Activated CD4-positive, alpha-beta memory T cell treated with anti-CD3 and anti-CD28 coated beads, Interleukin-2, amount 10 ng/mL, durations not matched to agents 7 days and 5 days (primary cell): ENCODE measurements at regions of chr20 and their contacts with region 1.

Region 1: DNA sequence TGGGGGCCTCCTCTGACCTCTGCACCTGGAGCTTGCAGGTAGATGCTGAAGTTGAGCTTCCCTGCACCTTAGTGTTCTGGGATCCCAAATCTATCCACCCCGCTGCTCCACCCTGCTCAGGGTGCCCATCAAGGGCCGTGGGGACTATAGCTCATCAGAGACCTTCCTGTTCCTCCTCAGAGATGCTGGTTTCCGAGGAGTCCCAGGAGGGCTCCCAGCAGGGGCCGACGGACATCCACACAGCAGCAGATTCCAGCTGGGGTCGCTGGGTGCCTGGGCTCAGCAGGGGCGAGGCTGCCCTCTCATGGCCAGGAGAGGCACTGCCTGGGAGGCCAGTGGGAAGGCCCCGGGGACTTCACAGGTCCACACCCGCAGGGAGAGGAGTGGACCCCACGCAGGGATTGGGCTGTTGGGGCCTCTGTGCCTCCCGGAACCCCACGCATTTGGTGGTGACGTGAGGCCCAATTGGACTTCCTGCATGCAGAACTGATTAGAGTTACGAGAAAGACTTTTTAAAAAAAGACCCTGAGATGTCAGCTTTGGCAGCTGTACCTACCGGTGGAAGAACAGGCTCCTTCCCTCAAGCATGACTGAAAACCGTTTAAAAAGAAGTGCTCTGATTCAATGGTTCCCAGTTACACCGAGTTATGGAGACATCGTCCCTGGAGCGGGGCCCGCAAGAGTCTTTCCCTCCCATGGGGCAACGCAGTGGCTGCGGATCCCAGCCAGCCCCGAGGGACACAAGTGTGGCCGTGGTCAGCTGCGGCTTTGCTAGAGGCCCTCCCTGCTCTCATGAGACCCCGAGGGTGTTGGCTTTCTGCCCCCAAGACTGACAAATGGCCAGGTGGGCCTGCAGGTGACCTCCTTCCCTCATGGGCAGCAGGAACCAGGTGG is 25.3 kb upstream of the SLCO4A1 start:
- DNase-seq: peak; percentile 79
- H3K4me3 Mint-ChIP-seq: peak overlapping the region; percentile 52
- H3K27ac Mint-ChIP-seq: peak overlapping the region; percentile 98
- H3K4me1 Mint-ChIP-seq: peaks cover 44% of the 10 kb centered on the region
- H3K27me3 Mint-ChIP-seq: peaks cover 15% of the 10 kb centered on the region

Region 2: DNA sequence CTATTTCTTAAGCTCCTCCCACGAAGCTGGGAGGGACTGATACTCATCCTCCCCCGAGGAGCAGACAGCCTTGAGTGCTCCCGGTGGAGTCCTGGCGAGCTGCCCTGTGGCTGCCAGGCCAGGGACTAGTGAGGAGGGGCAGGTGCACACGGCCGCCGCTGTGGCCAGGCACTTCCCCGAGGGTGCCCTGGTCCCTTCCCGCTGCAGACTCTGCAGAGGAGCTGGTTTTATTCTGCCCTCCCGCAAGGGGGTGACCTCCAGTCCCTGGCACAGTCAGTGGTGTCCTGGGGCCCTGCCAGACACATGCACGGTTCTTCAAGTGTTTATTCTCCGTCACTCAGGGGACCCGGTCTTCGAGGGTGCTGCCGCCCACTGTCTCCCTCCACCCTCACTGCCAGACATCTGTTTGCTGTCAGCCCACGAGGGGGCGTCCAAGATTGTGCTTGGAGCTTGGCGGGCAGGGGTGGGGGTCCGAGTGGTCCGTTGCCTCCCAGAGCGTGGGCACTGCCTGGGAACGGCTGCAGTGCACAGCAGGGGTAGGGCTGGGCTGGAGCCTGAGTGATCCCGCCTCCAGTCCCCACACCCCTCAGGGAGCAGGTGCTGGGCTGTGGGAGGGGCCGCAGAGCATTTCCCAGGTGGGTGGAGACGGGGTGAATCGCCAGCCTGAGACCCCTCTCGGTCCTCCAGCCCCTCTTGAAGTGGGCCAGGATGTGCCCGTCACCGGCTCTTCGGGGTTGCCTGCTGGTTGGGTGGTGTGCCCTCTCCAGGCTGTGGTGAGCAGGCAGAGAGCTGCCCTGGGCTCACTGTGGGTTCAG is 206.8 kb before region 1 on chr20:
- CTCF ChIA-PET with region 1: interaction called, 11 read pairs
- POLR2A ChIA-PET with region 1: interaction called, 3 read pairs
- DNase-seq: peak; percentile 40
- H3K4me3 Mint-ChIP-seq: no peak overlapping the region
- H3K27ac Mint-ChIP-seq: no peak overlapping the region
- H3K4me1 Mint-ChIP-seq: peaks cover 29% of the 10 kb centered on the region
- H3K27me3 Mint-ChIP-seq: no peaks in the 10 kb centered on the region

Region 3: DNA sequence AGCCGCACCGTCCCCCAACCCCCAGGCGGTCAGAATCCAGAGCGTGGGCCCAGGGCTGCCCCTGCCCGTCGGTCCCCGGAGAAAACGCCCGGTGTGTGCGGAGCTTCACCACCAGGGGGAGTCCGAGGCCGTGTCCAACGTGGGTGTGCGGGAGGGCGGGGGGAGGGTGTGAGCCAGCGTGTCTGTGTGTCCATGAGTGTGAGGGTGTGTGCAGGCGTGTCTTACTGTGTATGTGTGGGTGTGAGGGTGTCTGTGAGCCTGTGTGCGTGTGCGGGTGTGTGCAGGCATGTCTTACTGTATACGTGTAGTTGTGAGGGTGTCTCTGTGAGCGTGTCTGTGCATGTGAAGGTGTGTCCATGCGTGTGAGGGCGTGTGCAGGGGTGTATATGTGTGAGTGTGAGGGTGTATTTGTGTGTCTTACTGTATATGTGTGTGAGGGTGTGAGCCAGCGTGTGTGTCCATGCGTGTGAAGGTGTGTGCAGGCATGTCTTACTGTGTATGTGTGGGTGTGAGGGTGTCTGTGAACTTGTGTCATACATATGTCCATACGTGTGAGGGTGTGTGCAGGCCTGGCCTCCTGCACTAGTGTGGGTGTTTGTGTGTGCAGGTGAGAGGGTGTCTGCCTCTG is 116.6 kb before region 1 on chr20:
- CTCF ChIA-PET with region 1: interaction called, 25 read pairs
- POLR2A ChIA-PET with region 1: interaction called, 7 read pairs
- DNase-seq: peak; percentile 80
- H3K4me3 Mint-ChIP-seq: no peak overlapping the region
- H3K27ac Mint-ChIP-seq: no peak overlapping the region
- H3K4me1 Mint-ChIP-seq: peaks cover 26% of the 10 kb centered on the region
- H3K27me3 Mint-ChIP-seq: no peaks in the 10 kb centered on the region

Region 4: DNA sequence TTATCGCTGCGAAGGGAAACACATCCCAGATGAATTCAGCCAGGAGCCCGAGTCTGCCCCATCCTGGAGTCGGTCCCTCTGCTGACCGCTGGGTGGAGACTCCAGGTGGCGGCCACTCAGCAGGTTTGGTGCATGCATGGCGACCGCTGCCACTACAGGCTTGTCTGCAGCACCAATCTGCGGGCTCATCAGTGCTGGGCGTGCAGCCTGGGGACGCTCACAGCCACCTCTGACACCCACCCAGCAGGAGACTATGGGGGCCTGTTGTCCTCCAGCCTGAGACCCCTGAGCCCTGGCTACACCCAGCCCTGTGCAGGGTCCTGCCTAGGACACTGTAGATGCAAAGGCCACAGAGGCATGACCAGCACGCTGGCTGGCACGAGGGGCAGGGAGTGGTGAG is 100.6 kb before region 1 on chr20:
- CTCF ChIA-PET with region 1: no interaction called
- POLR2A ChIA-PET with region 1: no interaction called
- DNase-seq: no peak
- H3K4me3 Mint-ChIP-seq: no peak overlapping the region
- H3K27ac Mint-ChIP-seq: no peak overlapping the region
- H3K4me1 Mint-ChIP-seq: no peaks in the 10 kb centered on the region
- H3K27me3 Mint-ChIP-seq: peaks cover 18% of the 10 kb centered on the region

Region 5: DNA sequence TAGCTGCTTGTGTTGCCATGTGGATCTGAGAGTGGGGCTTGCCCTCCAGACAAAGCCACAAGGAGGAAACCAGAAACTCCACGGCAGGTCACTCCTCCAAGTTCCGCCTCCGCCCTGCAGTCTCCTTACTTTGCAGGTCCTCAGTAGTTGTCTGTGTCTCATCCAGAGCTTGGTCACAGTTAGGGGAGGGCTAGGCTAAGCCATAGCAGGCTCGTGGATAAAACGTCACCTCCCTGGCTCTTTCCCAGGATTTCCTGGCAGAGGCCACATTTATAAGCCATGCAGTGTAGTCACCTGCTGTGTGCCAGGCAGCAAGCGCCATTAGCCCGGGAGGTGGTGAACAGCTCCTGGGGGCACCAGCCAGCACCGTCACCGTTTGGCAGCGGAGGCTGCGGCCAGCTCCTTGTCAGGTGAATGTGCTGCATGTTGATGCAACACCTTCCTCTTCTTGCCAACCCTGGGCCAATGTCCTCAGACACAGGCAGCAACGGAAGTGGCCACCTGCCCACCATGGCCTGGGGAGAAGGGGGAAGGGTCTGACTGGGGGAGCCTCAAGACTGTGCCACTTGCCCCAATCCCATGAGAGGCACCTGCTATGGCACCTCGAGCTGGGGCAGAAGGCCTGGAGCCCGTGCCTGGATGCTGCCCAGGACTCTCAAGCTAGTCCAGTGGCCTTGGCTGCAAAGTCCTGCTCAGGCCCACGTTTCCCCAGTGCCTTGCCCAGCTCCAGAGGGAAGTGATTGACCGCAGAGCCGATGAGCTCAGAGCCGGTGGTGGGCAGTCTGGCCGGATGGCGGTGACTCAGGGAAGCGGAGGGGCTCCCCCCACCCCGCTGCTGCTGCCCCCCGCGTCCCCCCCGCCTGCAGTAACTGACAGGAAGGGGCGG is 13.7 kb before region 1 on chr20:
- CTCF ChIA-PET with region 1: interaction called, 16 read pairs
- POLR2A ChIA-PET with region 1: interaction called, 7 read pairs
- DNase-seq: peak; percentile 72
- H3K4me3 Mint-ChIP-seq: peak overlapping the region; percentile 62
- H3K27ac Mint-ChIP-seq: peak overlapping the region; percentile 84
- H3K4me1 Mint-ChIP-seq: peaks cover 51% of the 10 kb centered on the region
- H3K27me3 Mint-ChIP-seq: peaks cover 35% of the 10 kb centered on the region

Region 6: GRCh38 chr20:62636446-62636845 is 19.5 kb after region 1 on chr20:
- CTCF ChIA-PET with region 1: interaction called, 10 read pairs
- POLR2A ChIA-PET with region 1: interaction called, 31 read pairs
- DNase-seq: peak; percentile 37
- H3K4me3 Mint-ChIP-seq: no peak overlapping the region
- H3K27ac Mint-ChIP-seq: no peak overlapping the region
- H3K4me1 Mint-ChIP-seq: peaks cover 26% of the 10 kb centered on the region
- H3K27me3 Mint-ChIP-seq: peaks cover 41% of the 10 kb centered on the region

Region 7: GRCh38 chr20:62642040-62642665 is 25.2 kb after region 1 on chr20 and contains the start of gene SLCO4A1:
- CTCF ChIA-PET with region 1: interaction called, 28 read pairs
- POLR2A ChIA-PET with region 1: interaction called, 31 read pairs
- DNase-seq: peak; percentile 91
- H3K4me3 Mint-ChIP-seq: peak within 1 kb of the TSS; percentile 83
- H3K27ac Mint-ChIP-seq: peak within 1 kb of the TSS; percentile 71
- H3K4me1 Mint-ChIP-seq: peaks cover 42% of the 10 kb centered on the region
- H3K27me3 Mint-ChIP-seq: peaks cover 5% of the 10 kb centered on the region
- total RNA-seq, gene SLCO4A1: 51.5 to 51.7 TPM